ENCODE measurements at regions of chr1 and their contacts with region 1.

Region 1: DNA sequence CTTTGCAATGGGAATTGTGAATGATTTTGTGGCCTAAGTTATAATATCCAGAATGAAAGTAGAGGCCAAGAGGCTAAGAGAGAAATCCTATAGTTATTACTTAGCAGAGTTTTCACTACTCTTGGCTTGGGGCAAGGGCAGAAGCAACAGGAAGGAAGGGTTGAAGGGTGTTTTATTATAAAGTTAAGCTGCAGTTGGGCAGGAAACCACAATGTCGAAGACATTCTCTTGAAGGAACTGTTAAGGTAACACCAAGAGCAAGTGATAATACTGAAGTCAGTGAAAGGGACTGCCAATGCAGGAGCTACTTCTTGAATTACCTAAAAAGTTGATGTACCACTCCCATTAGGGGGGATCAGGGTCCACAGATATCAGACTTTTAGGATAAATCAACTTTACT is 8.3 kb downstream of the XCL2 start:
- DNase-seq: no peak
- H3K4me3 Mint-ChIP-seq: no peak overlapping the region
- H3K27ac Mint-ChIP-seq: peak overlapping the region; percentile 25
- H3K4me1 Mint-ChIP-seq: peaks cover 64% of the 10 kb centered on the region
- H3K27me3 Mint-ChIP-seq: no peaks in the 10 kb centered on the region

Region 2: GRCh38 chr1:168498159-168498631 is 37.3 kb before region 1 on chr1:
- CTCF ChIA-PET with region 1: no interaction called
- POLR2A ChIA-PET with region 1: no interaction called
- intact Hi-C with region 1: no loop called
- DNase-seq: no peak
- H3K4me3 Mint-ChIP-seq: no peak overlapping the region
- H3K27ac Mint-ChIP-seq: no peak overlapping the region
- H3K4me1 Mint-ChIP-seq: peaks cover 5% of the 10 kb centered on the region
- H3K27me3 Mint-ChIP-seq: no peaks in the 10 kb centered on the region

Region 3: DNA sequence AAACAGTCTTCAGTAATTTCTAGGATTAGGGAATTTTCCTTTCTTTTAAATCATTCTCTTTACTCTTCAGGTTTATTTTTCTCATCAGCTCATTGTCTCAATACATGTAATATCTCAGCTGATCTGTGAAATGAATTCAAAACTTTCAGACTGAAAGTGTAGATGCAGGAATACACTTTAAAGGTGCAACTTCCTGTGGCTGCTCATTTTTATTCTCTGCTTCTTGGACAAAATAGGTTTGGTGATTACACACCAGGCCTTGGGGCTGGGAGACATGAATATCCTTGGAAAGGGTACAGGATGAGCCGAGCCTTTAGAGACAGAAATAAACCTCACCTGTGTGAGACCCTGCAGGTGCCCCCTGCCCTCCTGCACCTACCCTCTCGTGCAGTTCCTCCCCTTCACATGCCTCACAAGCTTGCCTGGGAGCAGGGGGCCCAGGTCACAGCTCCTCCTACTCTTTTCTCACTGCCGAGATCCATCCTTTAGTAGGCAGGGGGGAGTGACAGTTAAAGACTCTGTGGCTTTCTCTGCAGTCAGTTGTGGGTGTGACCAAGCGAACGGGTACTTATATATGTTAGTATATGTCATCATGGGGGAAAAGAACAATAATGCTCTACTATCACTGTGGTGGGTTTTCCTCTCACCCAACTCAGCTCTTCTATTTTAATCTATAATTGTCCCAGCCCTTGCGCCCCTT is 15.3 kb before region 1 on chr1:
- CTCF ChIA-PET with region 1: no interaction called
- POLR2A ChIA-PET with region 1: interaction called, 4 read pairs
- intact Hi-C with region 1: loop called (anchors 1 kb)
- DNase-seq: peak; percentile 49
- H3K4me3 Mint-ChIP-seq: peak overlapping the region; percentile 32
- H3K27ac Mint-ChIP-seq: peak overlapping the region; percentile 73
- H3K4me1 Mint-ChIP-seq: peaks cover 48% of the 10 kb centered on the region
- H3K27me3 Mint-ChIP-seq: no peaks in the 10 kb centered on the region

Measured in activated CD4-positive, alpha-beta memory T cell treated with anti-CD3 and anti-CD28 coated beads for 36 hours (primary cell).